Activated CD4-positive, alpha-beta T cell treated with anti-CD3 and anti-CD28 coated beads for 36 hours (primary cell): ENCODE measurements at regions of chr21 and their contacts with region 1.

Region 1: DNA sequence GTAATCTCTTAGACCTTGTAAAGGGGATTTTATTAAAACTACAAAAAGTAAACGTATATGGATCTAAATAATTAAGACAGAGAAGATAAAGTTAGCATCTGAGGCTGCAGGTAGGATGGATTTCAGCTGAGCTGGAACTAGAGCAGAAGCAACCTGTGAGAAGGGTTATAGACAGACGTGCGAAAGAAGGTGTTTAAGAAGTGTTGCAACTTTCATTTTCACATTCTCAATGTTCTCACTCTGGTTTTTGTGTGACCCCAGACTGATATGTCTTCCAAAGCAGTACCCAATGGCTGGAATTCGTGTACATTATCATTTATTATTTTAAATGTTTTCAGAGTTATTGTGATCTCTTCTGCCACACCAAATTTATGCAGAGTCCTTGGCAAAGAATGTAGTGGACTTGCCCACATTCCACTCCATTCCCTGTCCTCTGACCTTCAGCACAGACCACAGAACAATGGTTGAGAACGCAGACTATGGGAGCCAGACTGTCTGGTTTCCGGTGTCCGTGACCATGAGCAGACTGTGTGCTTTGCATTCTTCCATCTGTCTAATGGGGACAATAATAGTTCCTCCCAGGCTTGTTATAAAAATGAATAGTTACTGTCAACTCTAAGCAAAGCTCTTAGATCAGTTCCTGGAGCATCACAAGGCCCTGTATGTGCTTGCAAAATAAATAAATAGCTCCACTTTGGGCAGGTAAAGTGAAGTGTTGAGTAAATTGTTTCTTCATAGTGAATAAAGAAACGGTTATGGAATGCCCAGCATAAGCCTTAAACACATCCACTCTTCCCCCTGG is 140.6 kb upstream of the SAMSN1 start:
- DNase-seq: no peak
- ATAC-seq: peak; percentile 10
- H3K4me3 Mint-ChIP-seq: no peak overlapping the region
- H3K27ac Mint-ChIP-seq: no peak overlapping the region
- H3K4me1 Mint-ChIP-seq: peaks cover 28% of the 10 kb centered on the region
- H3K27me3 Mint-ChIP-seq: no peaks in the 10 kb centered on the region

Region 2: DNA sequence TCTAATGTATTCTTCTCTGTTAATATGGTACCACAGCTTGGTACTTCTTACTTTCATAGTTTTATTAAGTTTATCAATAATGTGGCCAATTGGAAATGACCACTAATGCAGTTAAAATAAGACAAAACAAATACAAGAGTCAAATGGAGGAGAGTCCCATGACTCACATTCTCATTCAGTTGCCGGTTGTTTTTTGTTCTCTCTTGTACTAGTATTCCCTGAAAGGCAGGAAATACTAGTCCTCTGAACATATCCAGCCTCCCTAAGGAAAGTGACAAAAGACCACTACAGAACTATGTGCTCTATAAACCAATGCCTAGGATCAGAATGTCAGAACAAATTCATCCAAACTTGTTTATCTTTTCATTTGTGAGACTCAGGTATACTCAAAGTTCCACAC is 24.6 kb after region 1 on chr21:
- CTCF ChIA-PET with region 1: no interaction called
- POLR2A ChIA-PET with region 1: no interaction called
- intact Hi-C with region 1: no loop called
- DNase-seq: no peak
- ATAC-seq: no peak
- H3K4me3 Mint-ChIP-seq: no peak overlapping the region
- H3K27ac Mint-ChIP-seq: no peak overlapping the region
- H3K4me1 Mint-ChIP-seq: no peaks in the 10 kb centered on the region
- H3K27me3 Mint-ChIP-seq: no peaks in the 10 kb centered on the region

Region 3: GRCh38 chr21:14722841-14723483 is 36.3 kb after region 1 on chr21:
- CTCF ChIA-PET with region 1: interaction called, 3 read pairs
- POLR2A ChIA-PET with region 1: no interaction called
- intact Hi-C with region 1: loop called (anchors 2 to 5 kb)
- DNase-seq: no peak
- ATAC-seq: no peak
- H3K4me3 Mint-ChIP-seq: no peak overlapping the region
- H3K27ac Mint-ChIP-seq: no peak overlapping the region
- H3K4me1 Mint-ChIP-seq: peaks cover 4% of the 10 kb centered on the region
- H3K27me3 Mint-ChIP-seq: no peaks in the 10 kb centered on the region

Region 4: DNA sequence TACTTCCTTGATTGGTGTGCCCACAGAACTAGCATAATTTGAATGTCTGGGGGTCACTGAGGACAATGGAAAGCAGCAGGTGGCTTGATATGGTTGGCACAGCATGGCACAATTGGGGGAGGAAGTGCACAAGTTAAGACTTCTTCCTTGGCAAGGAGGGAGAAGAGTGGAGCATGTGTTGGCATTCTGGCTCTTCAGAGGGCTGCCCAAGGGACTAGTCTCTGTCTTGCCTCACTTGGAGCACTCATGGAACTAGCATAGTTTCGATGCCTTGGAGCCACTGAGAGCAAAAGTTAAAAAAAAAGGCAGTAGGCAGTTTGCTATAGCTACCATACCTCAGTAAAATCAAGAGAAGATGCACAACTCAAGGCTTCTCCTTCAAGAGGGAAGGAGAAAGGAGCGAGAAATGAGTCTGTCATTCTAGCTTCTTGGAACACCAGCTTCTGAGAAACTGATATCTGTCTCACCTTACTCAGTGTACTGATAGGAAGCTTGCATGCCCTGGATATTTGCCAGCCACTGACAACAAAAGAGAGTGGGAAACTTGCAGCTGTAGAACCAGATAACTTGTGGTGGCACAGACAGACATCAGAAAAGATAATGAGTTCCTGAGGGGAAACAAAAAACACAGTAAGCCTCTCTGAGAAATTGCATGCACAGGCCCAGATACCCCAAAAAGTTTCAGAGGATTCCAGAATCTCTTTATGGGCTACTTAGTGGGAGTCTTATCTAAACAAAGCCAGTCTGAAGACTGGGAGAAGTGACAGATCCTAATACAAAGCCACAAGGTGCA is 67.0 kb after region 1 on chr21:
- CTCF ChIA-PET with region 1: no interaction called
- POLR2A ChIA-PET with region 1: no interaction called
- intact Hi-C with region 1: no loop called
- DNase-seq: no peak
- ATAC-seq: no peak
- H3K4me3 Mint-ChIP-seq: no peak overlapping the region
- H3K27ac Mint-ChIP-seq: peak overlapping the region; percentile 9
- H3K4me1 Mint-ChIP-seq: no peaks in the 10 kb centered on the region
- H3K27me3 Mint-ChIP-seq: peaks cover 7% of the 10 kb centered on the region